H1 (cell line): ENCODE measurements at regions of chr1 and their contacts with region 1.

Region 1: DNA sequence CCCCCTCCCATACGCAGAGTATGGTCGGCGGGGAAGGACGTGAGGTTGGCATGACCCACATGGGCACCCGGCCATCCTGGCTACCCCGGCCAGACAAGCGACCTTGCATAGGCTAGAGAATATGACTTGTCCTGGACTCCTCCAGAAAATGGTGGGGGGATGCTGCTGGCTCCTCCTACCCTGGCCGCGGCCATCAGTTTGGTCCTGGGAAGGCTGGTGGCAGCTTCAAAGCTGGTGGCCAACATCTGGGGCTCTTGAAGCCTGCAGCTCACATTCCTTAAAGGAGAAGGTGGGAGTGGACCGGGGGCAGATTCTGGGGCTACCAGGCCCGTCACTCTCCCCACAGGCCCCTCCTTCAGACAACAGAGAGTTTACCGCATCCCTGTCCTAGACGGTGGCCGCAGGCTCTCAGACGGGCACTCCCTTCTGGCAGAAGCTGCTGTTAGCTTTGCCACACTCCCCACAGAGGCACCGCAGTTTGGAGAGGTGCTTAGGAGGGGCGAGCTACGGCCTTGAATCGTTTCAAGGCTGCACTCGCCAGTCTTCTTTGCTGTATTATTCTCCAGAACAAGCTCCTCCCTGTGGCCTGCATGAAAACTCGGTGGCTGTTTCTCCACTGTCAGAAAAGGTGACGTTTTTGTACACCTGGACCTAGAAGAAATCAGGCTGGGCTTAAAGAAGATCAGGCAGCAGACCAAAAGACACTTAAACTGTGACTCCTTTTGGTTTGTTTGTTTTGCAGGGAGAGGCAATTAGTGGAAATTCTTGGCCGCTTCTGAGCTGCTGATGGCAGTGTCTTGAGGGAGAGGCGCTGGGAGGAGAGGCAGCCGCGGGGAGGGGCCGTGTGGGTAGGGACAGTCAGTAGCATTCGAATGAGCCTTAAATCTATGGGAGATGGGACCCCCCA is 68.0 kb downstream of the RUNX3 start:
- DNase-seq: peak in 1 of 2 experiments; percentile 50
- H3K4me3 ChIP-seq: no peak overlapping the region
- H3K27ac ChIP-seq: no peak overlapping the region
- H3K4me1 ChIP-seq: peaks cover 0 to 4% (median 4%) of the 10 kb centered on the region in 4 experiments; a peak in 3 of 7 replicates
- H3K27me3 ChIP-seq: peaks cover 0 to 4% (median 0%) of the 10 kb centered on the region in 4 experiments; a peak in 2 of 7 replicates
- CTCF ChIP-seq: no peak
- EP300 ChIP-seq: no peak
- POLR2A ChIP-seq: no peak
- RAD21 ChIP-seq: no peak

Region 2: DNA sequence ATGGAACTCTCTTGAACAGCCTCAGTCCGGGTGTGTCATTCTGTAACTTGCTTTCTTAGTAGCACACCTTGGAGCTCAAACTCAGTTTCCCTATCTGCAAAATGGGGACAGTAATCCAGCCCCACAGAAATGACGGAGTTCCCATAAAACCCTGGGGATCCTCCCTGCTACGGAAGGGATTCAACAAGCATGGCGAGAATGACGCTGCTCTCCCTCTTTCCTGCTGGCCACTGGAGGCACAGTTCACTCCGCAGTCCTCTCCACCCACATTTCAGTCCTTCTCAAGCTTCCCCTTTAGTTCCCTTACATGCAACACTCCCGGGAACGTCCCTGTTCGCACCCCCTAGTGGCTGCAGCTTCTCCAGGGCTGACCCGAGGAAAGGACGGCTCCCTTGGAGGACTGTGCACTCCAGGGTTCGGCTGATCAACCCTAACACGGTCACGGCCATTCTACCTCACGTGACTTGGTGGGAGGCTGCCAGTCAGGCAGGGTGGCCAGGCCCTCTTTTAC is 47.4 kb after region 1 on chr1:
- CTCF ChIA-PET with region 1: interaction called, 10 read pairs
- POLR2A ChIA-PET with region 1: no interaction called
- DNase-seq: peak; percentile 79 to 89
- H3K4me3 ChIP-seq: no peak overlapping the region; a peak in 1 of 8 replicates
- H3K27ac ChIP-seq: no peak overlapping the region
- H3K4me1 ChIP-seq: peaks cover 0 to 2% (median 0%) of the 10 kb centered on the region in 4 experiments; a peak in 3 of 7 replicates
- H3K27me3 ChIP-seq: no peaks in the 10 kb centered on the region
- CTCF ChIP-seq: peak; percentile 72 to 95 (median 82)
- EP300 ChIP-seq: no peak
- POLR2A ChIP-seq: no peak
- RAD21 ChIP-seq: peak; percentile 56 to 67